T-cell (primary cell): ENCODE measurements at regions of chr2 and their contacts with region 1.

Region 1: GRCh38 chr2:18903750-18904149 is 314.4 kb upstream of the NT5C1B start:
- DNase-seq: no peak
- ATAC-seq: no peak
- H3K4me3 ChIP-seq: no peak overlapping the region
- H3K4me3 Mint-ChIP-seq: no peak overlapping the region
- H3K27ac ChIP-seq: no peak overlapping the region
- H3K27ac Mint-ChIP-seq: no peak overlapping the region
- H3K4me1 ChIP-seq: no peaks in the 10 kb centered on the region
- H3K4me1 Mint-ChIP-seq: no peaks in the 10 kb centered on the region
- H3K27me3 ChIP-seq: no peaks in the 10 kb centered on the region
- H3K27me3 Mint-ChIP-seq: no peaks in the 10 kb centered on the region

Region 2: DNA sequence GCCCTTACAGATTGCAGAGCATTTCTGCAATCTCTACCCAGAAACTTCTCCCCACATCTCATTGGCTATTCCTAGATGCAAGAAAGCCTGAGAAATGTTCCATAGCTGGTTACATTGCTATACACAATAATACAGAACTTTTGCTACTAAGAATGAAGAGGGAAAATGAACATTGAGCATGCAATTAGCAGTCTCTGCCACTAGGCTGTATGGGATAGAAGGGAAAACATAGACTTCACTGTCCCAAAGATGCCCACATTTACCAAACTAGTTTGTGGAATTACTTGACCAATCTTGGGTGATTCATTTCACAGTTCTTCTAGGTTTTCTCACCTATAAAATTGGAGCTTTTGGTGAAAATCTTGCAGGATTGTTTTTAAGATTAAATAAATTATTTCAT is 48.7 kb before region 1 on chr2:
- CTCF ChIA-PET with region 1: no interaction called
- POLR2A ChIA-PET with region 1: no interaction called
- DNase-seq: no peak
- ATAC-seq: no peak
- H3K4me3 ChIP-seq: no peak overlapping the region
- H3K4me3 Mint-ChIP-seq: no peak overlapping the region
- H3K27ac ChIP-seq: no peak overlapping the region
- H3K27ac Mint-ChIP-seq: no peak overlapping the region
- H3K4me1 ChIP-seq: no peaks in the 10 kb centered on the region
- H3K4me1 Mint-ChIP-seq: peaks cover 0 to 5% (median 0%) of the 10 kb centered on the region in 3 donors
- H3K27me3 ChIP-seq: no peaks in the 10 kb centered on the region
- H3K27me3 Mint-ChIP-seq: no peaks in the 10 kb centered on the region

Region 3: DNA sequence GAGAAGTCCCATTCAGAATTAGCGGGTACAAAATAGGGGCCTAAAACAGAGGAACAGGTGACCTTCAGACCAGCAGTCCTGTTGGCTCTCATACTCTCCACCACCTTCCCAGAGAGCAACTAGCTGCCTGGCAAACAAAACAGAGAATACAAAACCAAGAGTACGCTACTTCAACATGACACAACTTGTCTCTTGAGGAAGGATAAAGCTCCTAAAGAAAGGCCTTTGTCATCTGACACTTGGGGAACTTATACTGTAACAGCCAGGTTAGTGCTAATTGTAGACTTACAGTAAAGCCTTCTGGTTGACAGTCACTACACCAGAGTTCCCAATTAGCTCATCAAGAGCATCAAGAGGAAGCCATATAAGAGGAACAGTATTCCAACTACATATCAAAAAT is 32.3 kb before region 1 on chr2:
- CTCF ChIA-PET with region 1: no interaction called
- POLR2A ChIA-PET with region 1: no interaction called
- DNase-seq: no peak
- ATAC-seq: no peak
- H3K4me3 ChIP-seq: no peak overlapping the region
- H3K4me3 Mint-ChIP-seq: no peak overlapping the region
- H3K27ac ChIP-seq: no peak overlapping the region
- H3K27ac Mint-ChIP-seq: no peak overlapping the region
- H3K4me1 ChIP-seq: no peaks in the 10 kb centered on the region
- H3K4me1 Mint-ChIP-seq: no peaks in the 10 kb centered on the region
- H3K27me3 ChIP-seq: no peaks in the 10 kb centered on the region
- H3K27me3 Mint-ChIP-seq: no peaks in the 10 kb centered on the region

Region 4: DNA sequence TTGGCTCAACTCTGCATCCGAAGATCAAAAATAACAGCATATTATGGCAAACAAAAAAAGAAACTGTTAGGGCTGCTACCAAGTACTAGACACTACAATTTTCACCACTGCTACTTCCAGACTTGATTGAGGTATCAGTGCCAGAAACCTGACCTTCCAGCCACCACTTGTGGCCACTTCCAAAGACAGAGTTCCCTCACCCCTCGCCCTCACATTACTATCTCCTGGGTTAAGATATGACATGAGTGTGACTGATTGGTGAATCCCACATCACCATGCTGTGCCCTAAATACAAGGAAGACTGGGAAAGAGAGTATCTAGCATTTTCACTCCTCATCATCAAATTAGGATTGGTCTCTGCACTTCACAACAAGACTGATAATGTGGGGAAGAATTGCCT is 18.3 kb before region 1 on chr2:
- CTCF ChIA-PET with region 1: no interaction called
- POLR2A ChIA-PET with region 1: interaction called in 1 of 2 experiments, 11 read pairs
- DNase-seq: no peak
- ATAC-seq: no peak
- H3K4me3 ChIP-seq: no peak overlapping the region
- H3K4me3 Mint-ChIP-seq: no peak overlapping the region
- H3K27ac ChIP-seq: no peak overlapping the region
- H3K27ac Mint-ChIP-seq: no peak overlapping the region
- H3K4me1 ChIP-seq: no peaks in the 10 kb centered on the region
- H3K4me1 Mint-ChIP-seq: no peaks in the 10 kb centered on the region
- H3K27me3 ChIP-seq: no peaks in the 10 kb centered on the region
- H3K27me3 Mint-ChIP-seq: no peaks in the 10 kb centered on the region